Right ventricle myocardium inferior (tissue), 1 donor: ENCODE measurements at regions of chr10 and their contacts with region 1.

Region 1: DNA sequence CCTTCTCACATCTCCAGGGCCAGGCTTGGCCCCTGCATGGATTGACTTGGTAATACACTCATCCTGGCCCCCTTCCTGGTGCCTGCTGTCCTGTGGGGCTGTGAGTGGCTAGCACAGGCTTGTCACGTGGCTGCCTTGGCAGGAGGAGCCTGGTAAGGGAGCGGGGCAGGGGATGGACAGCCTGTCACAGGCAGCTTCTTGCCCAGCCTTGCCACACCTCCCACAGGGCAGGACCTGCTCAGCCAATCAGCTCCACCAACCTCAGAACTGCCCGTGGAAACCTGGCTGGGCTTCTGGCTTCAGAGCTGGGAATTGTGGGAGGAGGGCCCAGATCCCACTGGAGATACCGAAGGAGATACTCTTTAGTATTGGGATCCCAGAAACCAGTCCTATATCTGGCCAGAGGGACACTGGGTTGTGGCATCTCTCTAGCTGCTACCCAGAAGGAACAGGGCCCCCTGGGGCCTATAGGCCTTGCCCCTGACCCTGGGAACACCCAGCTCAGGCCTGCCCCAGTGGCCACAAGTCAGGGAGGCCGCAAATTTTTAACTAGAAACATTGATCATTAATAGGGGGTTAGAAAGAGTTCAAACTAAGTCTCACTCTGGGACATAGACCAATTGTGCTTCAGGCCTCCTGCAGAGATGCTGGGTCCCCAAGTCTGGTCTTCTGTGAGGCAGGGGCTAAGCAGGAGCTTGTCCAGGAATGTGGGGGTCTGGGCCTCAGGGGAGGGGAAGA is at the start of gene HOGA1:
- DNase-seq: peak; percentile 87
- ATAC-seq: peak; percentile 94
- total RNA-seq, gene HOGA1: 15.6 TPM

Region 2: DNA sequence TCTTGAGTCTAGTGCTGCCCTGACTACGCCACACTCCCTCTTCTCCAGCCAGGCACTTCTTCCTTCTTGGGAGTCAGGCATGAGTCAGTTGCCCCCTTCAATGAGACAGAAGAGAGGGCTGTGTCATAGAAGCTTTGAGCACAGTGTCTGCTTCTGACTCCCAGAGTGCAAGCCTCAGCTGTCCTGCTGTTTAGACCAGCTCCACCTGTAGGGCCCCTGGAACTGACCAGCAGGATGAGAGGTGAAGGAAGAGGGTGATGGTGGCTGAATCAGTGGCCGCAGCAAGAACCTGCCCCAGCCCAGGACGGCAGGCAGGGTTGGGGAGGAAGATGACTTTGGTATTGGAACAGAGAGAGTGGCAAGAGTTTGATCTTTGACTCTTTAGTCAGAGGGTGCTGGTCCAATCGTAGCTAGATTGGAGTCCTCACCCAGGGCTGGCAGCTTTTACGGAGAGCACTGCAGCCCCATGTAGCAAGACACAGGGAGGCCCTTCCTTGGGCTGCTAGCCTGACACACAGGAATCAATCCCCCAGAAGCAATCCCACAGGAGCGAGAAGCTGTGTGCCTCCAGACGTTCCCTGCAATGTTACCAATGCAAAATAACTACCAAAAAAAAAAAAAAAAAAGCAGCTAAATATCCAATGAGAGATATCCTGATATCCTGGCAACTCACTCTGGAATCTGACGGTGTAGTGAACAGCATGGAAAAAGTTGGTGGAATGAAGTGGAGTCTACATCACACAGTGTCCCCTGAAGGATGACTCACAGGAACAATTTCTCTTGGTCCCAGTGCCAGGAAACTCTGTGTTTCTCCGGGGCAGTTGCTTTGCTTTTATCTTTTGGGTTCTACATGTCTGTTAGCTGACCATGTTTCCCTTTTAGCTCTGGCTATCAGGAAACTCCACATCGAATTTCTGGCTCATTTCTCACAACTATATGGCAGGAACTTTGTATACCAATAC is 12.2 kb after region 1 on chr10:
- intact Hi-C with region 1: loop called (anchors 1 kb)
- DNase-seq: no peak
- ATAC-seq: peak; percentile 93